Panc1 (cell line): ENCODE measurements at regions of chr18 and their contacts with region 1.

Region 1: GRCh38 chr18:36296650-36297416 is 680 bp upstream of the FHOD3 start:
- DNase-seq: no peak
- ATAC-seq: peak; percentile 74
- H3K4me3 ChIP-seq: peak overlapping the region; percentile 60 to 63
- H3K27ac ChIP-seq: peak overlapping the region; percentile 69
- H3K4me1 ChIP-seq: peaks cover 10% of the 10 kb centered on the region
- H3K27me3 ChIP-seq: no peaks in the 10 kb centered on the region
- CTCF ChIP-seq: peak; percentile 77

Region 2: GRCh38 chr18:36284671-36285295 is 12.1 kb before region 1 on chr18:
- CTCF ChIA-PET with region 1: no interaction called
- POLR2A ChIA-PET with region 1: no interaction called
- in situ Hi-C with region 1: no loop called
- intact Hi-C with region 1: no loop called
- DNase-seq: peak; percentile 59
- ATAC-seq: peak; percentile 72
- H3K4me3 ChIP-seq: no peak overlapping the region
- H3K27ac ChIP-seq: no peak overlapping the region
- H3K4me1 ChIP-seq: no peaks in the 10 kb centered on the region
- H3K27me3 ChIP-seq: no peaks in the 10 kb centered on the region; the same call in 1 of the 2 replicates
- CTCF ChIP-seq: peak; percentile 81

Region 3: DNA sequence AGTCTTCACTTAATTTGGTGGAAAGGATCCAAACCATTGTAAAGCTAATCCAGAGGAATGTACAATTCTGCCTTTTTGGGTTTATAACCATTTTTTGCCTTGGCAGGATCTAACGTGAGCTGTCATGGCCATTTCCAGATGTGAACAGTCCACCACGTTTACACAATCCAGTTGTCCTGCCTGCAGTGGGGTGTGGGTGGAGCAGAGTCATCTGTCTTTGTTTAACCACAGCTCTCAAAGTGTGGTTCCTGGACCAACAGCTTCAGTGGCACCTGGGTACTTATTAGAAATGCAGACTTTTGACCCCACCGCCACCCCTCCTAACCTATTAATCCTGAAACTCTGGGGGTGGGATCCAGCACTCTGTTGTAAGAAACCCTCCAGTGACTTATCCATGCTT is 36.6 kb after region 1 on chr18:
- CTCF ChIA-PET with region 1: interaction called, 9 read pairs
- POLR2A ChIA-PET with region 1: interaction called, 20 read pairs
- in situ Hi-C with region 1: no loop called
- intact Hi-C with region 1: no loop called
- DNase-seq: no peak
- ATAC-seq: no peak
- H3K4me3 ChIP-seq: no peak overlapping the region
- H3K27ac ChIP-seq: no peak overlapping the region
- H3K4me1 ChIP-seq: no peaks in the 10 kb centered on the region
- H3K27me3 ChIP-seq: no peaks in the 10 kb centered on the region
- CTCF ChIP-seq: no peak

Region 4: GRCh38 chr18:36411745-36412168 is 114.9 kb after region 1 on chr18:
- CTCF ChIA-PET with region 1: no interaction called
- POLR2A ChIA-PET with region 1: no interaction called
- in situ Hi-C with region 1: no loop called
- intact Hi-C with region 1: loop called (anchors 5 kb)
- DNase-seq: no peak
- ATAC-seq: 0 out of 2 replicates have a peak, but pooled peaks have one; percentile 68
- H3K4me3 ChIP-seq: no peak overlapping the region
- H3K27ac ChIP-seq: no peak overlapping the region
- H3K4me1 ChIP-seq: no peaks in the 10 kb centered on the region
- H3K27me3 ChIP-seq: no peaks in the 10 kb centered on the region
- CTCF ChIP-seq: peak; percentile 56

Region 5: GRCh38 chr18:36572135-36572856 is 275.5 kb after region 1 on chr18:
- CTCF ChIA-PET with region 1: interaction called, 4 read pairs
- POLR2A ChIA-PET with region 1: no interaction called
- in situ Hi-C with region 1: no loop called
- intact Hi-C with region 1: loop called (anchors 2 kb)
- DNase-seq: peak; percentile 46
- ATAC-seq: peak; percentile 88
- H3K4me3 ChIP-seq: no peak overlapping the region
- H3K27ac ChIP-seq: peak overlapping the region; percentile 9; the same call in 1 of the 2 replicates
- H3K4me1 ChIP-seq: peaks cover 8% of the 10 kb centered on the region; the same call in 1 of the 2 replicates
- H3K27me3 ChIP-seq: no peaks in the 10 kb centered on the region
- CTCF ChIP-seq: peak; percentile 81